B cell (primary cell): ENCODE measurements at regions of chr13 and their contacts with region 1.

Region 1: DNA sequence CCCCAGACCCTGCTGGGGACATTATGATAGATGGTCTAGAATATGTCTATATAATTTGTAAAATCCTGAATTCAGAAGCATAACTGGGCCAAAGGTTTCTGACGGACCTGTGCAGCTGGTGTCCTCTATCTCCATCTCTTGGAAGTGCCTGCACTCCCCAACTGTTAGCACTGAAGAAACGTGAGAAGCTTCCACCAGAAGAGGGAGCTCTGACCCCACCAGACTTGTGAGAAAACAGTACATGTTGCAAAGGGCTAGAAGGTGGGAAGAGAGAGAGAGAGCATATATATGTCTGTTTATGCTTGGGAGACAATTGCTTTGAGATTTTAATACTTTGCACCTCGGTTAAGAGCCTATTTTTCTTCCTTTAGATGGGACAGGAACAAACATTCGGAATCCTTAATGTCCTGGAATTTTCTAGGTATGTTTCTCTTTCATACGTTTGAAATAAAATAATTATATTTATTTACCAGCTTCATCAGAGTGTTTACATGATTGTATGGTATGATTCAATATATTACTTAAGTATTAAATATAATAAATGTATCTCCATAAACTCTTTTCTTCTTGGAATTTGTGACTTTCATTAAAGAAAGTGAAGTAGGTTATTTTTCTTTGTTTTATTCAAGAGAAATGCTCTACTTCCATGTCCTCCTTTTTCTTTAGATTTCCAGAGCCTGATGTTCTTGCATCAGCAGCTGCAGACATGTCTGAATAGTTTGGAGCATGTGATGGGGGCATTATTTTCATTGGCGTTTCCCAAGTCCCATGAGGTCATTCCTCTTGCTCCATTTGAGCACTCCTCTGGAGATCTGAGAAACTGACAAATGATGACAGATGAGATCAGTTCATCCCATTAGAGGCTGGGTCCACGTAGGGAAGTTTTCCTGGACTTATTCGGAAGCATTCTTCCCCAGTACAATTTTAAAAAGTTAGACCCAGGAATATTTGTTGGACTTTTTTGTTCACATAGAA is 202.9 kb downstream of the ATP8A2 start:
- DNase-seq: peak; percentile 68
- ATAC-seq: peak; percentile 36
- H3K4me3 ChIP-seq: no peak overlapping the region
- H3K4me3 Mint-ChIP-seq: no peak overlapping the region
- H3K27ac ChIP-seq: no peak overlapping the region
- H3K27ac Mint-ChIP-seq: no peak overlapping the region
- H3K4me1 ChIP-seq: no peaks in the 10 kb centered on the region
- H3K4me1 Mint-ChIP-seq: no peaks in the 10 kb centered on the region
- H3K27me3 ChIP-seq: peaks cover 0 to 3% (median under 1%) of the 10 kb centered on the region in 4 experiments
- H3K27me3 Mint-ChIP-seq: peaks cover 18% of the 10 kb centered on the region
- CTCF ChIP-seq: peak; percentile 77

Region 2: GRCh38 chr13:26698392-26699196 is 1123.9 kb after region 1 on chr13:
- CTCF ChIA-PET with region 1: interaction called, 24 read pairs
- POLR2A ChIA-PET with region 1: no interaction called
- intact Hi-C with region 1: no loop called
- DNase-seq: peak; percentile 80
- ATAC-seq: peak; percentile 87
- H3K4me3 ChIP-seq: no peak overlapping the region
- H3K4me3 Mint-ChIP-seq: no peak overlapping the region
- H3K27ac ChIP-seq: no peak overlapping the region
- H3K27ac Mint-ChIP-seq: no peak overlapping the region
- H3K4me1 ChIP-seq: peaks cover 0 to 5% of the 10 kb centered on the region in 2 donors
- H3K4me1 Mint-ChIP-seq: peaks cover 6% of the 10 kb centered on the region
- H3K27me3 ChIP-seq: peaks cover 0 to 9% (median 0%) of the 10 kb centered on the region in 4 experiments
- H3K27me3 Mint-ChIP-seq: peaks cover 9% of the 10 kb centered on the region
- CTCF ChIP-seq: peak; percentile 97